CD8-positive, alpha-beta T cell (primary cell): ENCODE measurements at regions of chr6 and their contacts with region 1.

Region 1: GRCh38 chr6:37559501-37559900 is 59.8 kb upstream of the CCDC167 start:
- DNase-seq: peak in 1 of 9 experiments; percentile 35
- ATAC-seq: peak; percentile 42
- H3K4me3 ChIP-seq: no peak overlapping the region
- H3K4me3 Mint-ChIP-seq: peak overlapping the region; percentile 12
- H3K27ac ChIP-seq: no peak overlapping the region
- H3K27ac Mint-ChIP-seq: peak overlapping the region; percentile 7
- H3K4me1 ChIP-seq: peaks cover 18% of the 10 kb centered on the region
- H3K4me1 Mint-ChIP-seq: peaks cover 30% of the 10 kb centered on the region
- H3K27me3 ChIP-seq: no peaks in the 10 kb centered on the region
- H3K27me3 Mint-ChIP-seq: no peaks in the 10 kb centered on the region
- CTCF ChIP-seq: no peak

Region 2: DNA sequence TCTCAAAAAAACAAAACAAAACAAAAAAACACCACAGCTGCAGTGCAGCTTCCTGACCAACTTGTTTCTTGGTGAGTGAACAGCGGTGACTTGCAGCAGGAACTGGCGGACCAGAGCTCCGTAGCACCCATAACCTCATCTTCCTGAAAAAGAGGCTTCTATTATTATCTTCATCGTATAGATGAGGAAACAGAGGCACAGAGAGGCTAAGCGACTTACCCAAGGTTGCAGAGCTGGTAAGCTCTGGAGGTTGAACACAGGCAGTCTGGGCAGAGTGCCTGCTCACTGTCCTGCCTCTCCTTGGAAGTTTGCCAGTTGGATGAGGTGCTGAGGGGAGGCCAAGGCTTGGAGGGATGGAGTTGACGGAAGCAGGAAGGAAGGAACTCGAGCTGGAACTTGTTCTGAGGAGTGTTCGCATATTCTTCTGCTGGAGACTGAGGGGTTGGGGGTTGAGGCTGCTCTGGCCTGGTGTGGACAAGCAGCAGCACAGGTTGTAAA is 11.9 kb before region 1 on chr6:
- CTCF ChIA-PET with region 1: no interaction called
- POLR2A ChIA-PET with region 1: interaction called, 12 read pairs
- intact Hi-C with region 1: no loop called
- DNase-seq: peak in 4 of 9 experiments; percentile 17 to 68 (median 55)
- ATAC-seq: peak; percentile 46
- H3K4me3 ChIP-seq: no peak overlapping the region
- H3K4me3 Mint-ChIP-seq: peak overlapping the region; percentile 51
- H3K27ac ChIP-seq: peak overlapping the region in 1 of 2 experiments; percentile 72
- H3K27ac Mint-ChIP-seq: peak overlapping the region; percentile 80
- H3K4me1 ChIP-seq: peaks cover 17% of the 10 kb centered on the region
- H3K4me1 Mint-ChIP-seq: peaks cover 45% of the 10 kb centered on the region
- H3K27me3 ChIP-seq: no peaks in the 10 kb centered on the region
- H3K27me3 Mint-ChIP-seq: no peaks in the 10 kb centered on the region
- CTCF ChIP-seq: no peak

Region 3: GRCh38 chr6:38378801-38379200 is 819.3 kb after region 1 on chr6:
- CTCF ChIA-PET with region 1: no interaction called
- POLR2A ChIA-PET with region 1: no interaction called
- intact Hi-C with region 1: no loop called
- DNase-seq: no peak
- ATAC-seq: no peak
- H3K4me3 ChIP-seq: no peak overlapping the region
- H3K4me3 Mint-ChIP-seq: no peak overlapping the region
- H3K27ac ChIP-seq: no peak overlapping the region
- H3K27ac Mint-ChIP-seq: no peak overlapping the region
- H3K4me1 ChIP-seq: no peaks in the 10 kb centered on the region
- H3K4me1 Mint-ChIP-seq: peaks cover 4% of the 10 kb centered on the region
- H3K27me3 ChIP-seq: no peaks in the 10 kb centered on the region
- H3K27me3 Mint-ChIP-seq: no peaks in the 10 kb centered on the region
- CTCF ChIP-seq: no peak